HEK293 (cell line): ENCODE measurements at regions of chr2 and their contacts with region 1.

Region 1: DNA sequence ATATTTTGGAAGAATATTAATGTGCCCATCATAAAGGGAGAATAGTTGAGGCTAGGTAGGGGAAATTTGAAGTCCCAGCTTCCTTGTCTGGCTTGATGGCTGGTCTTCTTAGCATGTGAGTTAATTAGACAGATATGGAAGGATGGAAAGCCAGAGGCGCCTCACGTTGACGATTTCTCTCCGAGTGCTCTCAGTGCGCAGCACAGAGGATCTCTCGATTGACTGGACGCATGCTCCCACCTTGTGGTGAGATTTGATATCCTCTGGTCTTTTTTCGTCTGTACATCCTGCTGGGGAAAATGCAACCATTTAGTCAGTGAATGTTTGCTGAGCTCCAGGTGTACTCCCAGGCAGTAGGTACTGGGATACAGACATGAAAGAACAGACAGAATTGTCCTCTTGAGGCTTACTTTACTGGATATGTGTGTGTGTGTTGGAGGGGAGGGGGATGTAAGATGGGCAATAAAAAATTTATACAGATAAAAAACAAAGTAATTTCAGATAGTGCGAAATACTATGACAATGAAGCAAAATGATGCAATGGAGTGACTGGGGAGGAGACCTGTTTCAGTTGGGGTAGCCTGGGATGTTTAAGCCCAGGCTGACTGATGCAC is 66.9 kb upstream of the ZNG1B start:
- H3K4me3 ChIP-seq: no peak overlapping the region
- H3K27ac ChIP-seq: no peak overlapping the region
- H3K4me1 ChIP-seq: no peaks in the 10 kb centered on the region
- CTCF ChIP-seq: peak; percentile 75

Region 2: GRCh38 chr2:112685271-112685884 is 685.2 kb before region 1 on chr2:
- CTCF ChIA-PET with region 1: no interaction called
- POLR2A ChIA-PET with region 1: no interaction called
- H3K4me3 ChIP-seq: no peak overlapping the region
- H3K27ac ChIP-seq: no peak overlapping the region
- H3K4me1 ChIP-seq: 0 out of 2 replicates have a peak, but pooled peaks cover 2% of the 10 kb centered on the region
- CTCF ChIP-seq: no peak

Region 3: GRCh38 chr2:113248997-113249770 is 121.4 kb before region 1 on chr2:
- CTCF ChIA-PET with region 1: interaction called, 66 read pairs
- POLR2A ChIA-PET with region 1: no interaction called
- H3K4me3 ChIP-seq: no peak overlapping the region
- H3K27ac ChIP-seq: no peak overlapping the region
- H3K4me1 ChIP-seq: no peaks in the 10 kb centered on the region
- CTCF ChIP-seq: peak; percentile 65

Region 4: DNA sequence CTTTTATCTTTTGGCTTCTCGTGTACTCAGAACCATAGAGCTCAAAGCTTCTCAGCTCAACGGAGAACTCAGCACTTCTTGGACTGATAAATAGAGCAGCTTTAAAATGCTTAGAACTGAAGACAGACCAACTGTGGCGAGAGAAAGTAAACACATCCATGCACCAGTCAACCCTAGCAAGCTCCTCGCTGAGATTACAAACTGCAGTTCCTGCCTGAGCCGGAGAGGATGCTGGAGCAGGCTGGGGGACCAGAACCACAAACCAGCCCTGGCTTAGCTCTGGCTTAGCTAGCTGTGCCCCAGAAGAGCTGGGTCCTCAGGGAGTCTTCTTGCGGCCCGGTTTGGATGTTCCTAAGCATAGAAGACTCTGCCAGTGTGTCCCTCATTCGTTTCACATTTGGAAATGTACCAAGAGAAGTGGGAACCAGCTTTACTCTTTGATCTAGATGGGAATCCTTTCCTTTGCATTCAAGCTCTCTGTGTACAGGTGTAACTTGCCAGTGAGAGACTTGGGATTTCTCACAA is 97.5 kb before region 1 on chr2:
- CTCF ChIA-PET with region 1: no interaction called
- POLR2A ChIA-PET with region 1: no interaction called
- H3K4me3 ChIP-seq: no peak overlapping the region
- H3K27ac ChIP-seq: no peak overlapping the region
- H3K4me1 ChIP-seq: no peaks in the 10 kb centered on the region
- CTCF ChIP-seq: 0 out of 2 replicates have a peak, but pooled peaks have one; percentile 8